Mammary epithelial cell (primary cell): ENCODE measurements at regions of chr14 and their contacts with region 1.

Region 1: GRCh38 chr14:51780006-51780692 is 80.3 kb upstream of the GNG2 start:
- DNase-seq: peak; percentile 35
- H3K4me3 ChIP-seq: no peak overlapping the region
- H3K27ac ChIP-seq: no peak overlapping the region
- H3K4me1 ChIP-seq: peaks cover 7% of the 10 kb centered on the region
- H3K27me3 ChIP-seq: no peaks in the 10 kb centered on the region
- CTCF ChIP-seq: peak; percentile 67 to 76

Region 2: DNA sequence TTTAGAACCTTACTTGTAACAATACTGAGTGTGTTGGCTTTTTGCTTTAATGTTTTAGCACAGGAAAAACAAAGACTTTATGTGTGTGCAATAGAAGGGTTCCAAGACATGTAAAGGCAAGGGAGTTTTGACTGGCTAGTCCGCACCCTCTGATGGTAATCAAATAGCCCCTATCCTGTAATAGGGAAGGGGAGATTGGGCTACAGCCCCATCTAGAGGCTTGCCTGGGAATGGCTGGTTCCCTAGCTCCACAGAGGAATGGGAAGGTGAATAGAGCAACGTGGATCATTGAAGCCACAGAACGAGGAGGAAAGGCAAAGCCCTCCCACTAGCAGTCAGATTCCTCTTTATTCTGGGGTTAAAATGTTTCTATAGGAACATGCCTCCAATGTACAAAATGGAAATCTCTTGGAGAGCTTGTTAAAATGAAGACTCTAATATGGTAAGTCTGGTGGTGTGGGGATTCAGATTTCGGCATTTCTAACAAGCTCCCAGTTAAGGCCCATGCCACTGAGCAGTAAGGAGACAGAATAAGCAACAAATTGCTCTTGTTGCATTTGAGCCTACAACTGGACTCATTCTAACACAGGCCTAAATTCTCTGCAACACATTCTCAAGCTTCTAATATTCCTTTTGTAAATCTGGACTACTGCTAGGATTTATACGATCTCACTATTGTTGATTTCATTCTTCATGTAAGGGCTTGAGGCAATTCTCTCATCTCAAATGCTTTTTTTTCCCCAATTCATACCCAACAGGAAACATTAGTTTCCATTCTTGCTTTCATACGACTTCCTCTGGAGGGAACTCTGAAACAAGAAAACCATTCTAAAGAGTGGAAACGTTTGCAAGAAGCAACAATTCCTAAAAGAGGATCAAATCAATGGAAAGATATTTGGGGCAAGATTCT is 1006.3 kb before region 1 on chr14:
- CTCF ChIA-PET with region 1: no interaction called
- dilution Hi-C with region 1: no loop called
- in situ Hi-C with region 1: no loop called
- intact Hi-C with region 1: loop called (anchors 5 kb)
- DNase-seq: peak; percentile 59
- H3K4me3 ChIP-seq: no peak overlapping the region
- H3K27ac ChIP-seq: peak overlapping the region; percentile 9
- H3K4me1 ChIP-seq: peaks cover 43% of the 10 kb centered on the region
- H3K27me3 ChIP-seq: no peaks in the 10 kb centered on the region
- CTCF ChIP-seq: peak; percentile 92 to 97

Region 3: GRCh38 chr14:50954811-50955372 is 825.3 kb before region 1 on chr14:
- CTCF ChIA-PET with region 1: no interaction called
- dilution Hi-C with region 1: no loop called
- in situ Hi-C with region 1: no loop called
- intact Hi-C with region 1: loop called (anchors 1 kb)
- DNase-seq: peak; percentile 66
- H3K4me3 ChIP-seq: peak overlapping the region in 2 of 3 experiments; percentile 20 to 33
- H3K27ac ChIP-seq: peak overlapping the region; percentile 88
- H3K4me1 ChIP-seq: peaks cover 14% of the 10 kb centered on the region
- H3K27me3 ChIP-seq: no peaks in the 10 kb centered on the region
- CTCF ChIP-seq: peak; percentile 53 to 74

Region 4: GRCh38 chr14:51283402-51284085 is 496.6 kb before region 1 on chr14:
- CTCF ChIA-PET with region 1: interaction called, 3 read pairs
- dilution Hi-C with region 1: no loop called
- in situ Hi-C with region 1: loop called (anchors 5 to 10 kb)
- intact Hi-C with region 1: loop called (anchors 1 kb)
- DNase-seq: peak; percentile 78
- H3K4me3 ChIP-seq: no peak overlapping the region
- H3K27ac ChIP-seq: no peak overlapping the region
- H3K4me1 ChIP-seq: peaks cover 9% of the 10 kb centered on the region
- H3K27me3 ChIP-seq: no peaks in the 10 kb centered on the region
- CTCF ChIP-seq: peak; percentile 67 to 84

Region 5: GRCh38 chr14:51554953-51555352 is 225.2 kb before region 1 on chr14:
- CTCF ChIA-PET with region 1: interaction called, 3 read pairs
- dilution Hi-C with region 1: no loop called
- in situ Hi-C with region 1: no loop called
- intact Hi-C with region 1: loop called (anchors 10 kb)
- DNase-seq: no peak
- H3K4me3 ChIP-seq: no peak overlapping the region
- H3K27ac ChIP-seq: peak overlapping the region; percentile 11
- H3K4me1 ChIP-seq: peaks cover 39% of the 10 kb centered on the region
- H3K27me3 ChIP-seq: no peaks in the 10 kb centered on the region
- CTCF ChIP-seq: no peak

Region 6: DNA sequence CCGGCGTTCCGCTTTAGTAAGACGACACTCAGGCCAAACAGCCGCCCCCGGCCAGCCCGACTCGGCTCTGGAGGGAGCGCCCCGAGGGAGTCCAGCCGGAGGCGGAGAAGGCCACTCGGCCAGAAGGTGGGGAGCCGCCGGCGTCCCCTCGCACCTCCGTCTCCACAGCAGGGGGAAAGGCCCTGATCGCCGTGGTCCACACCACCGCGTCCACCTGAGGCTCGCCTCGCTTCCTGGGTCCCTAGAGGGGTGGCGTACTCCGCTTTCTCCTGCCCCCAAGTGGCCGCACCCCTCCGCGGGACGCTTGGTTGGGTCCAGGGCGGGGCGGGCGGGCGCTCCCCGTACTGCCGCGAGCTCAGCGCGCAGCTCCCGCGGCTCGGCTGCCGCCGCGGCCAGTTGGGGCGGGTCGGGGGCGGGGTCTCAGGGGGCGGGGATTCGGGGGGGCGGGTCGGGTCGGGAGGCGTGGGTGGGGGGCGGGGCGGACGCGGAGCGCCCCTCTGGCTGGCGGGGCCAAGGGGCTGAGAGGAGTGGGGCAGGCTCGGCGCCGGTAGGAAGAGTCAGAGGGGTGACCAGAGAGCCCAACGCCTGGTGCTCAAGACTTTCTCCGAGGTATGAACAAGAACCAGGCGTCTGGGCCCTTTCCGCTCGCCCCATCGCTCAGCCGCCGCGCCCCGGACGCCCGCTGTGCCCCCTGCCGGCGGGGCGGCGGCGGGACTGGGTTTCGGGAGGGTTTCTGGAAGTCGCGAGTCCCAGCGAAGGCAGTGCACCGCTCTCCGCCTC is 128.6 kb before region 1 on chr14 and contains the start of gene FRMD6:
- CTCF ChIA-PET with region 1: no interaction called
- dilution Hi-C with region 1: no loop called
- in situ Hi-C with region 1: no loop called
- intact Hi-C with region 1: loop called (anchors 1 kb)
- DNase-seq: peak; percentile 88
- H3K4me3 ChIP-seq: peak within 1 kb of the TSS; percentile 89 to 94 (median 91)
- H3K27ac ChIP-seq: peak within 1 kb of the TSS; percentile 85
- H3K4me1 ChIP-seq: peaks cover 16% of the 10 kb centered on the region
- H3K27me3 ChIP-seq: no peaks in the 10 kb centered on the region
- CTCF ChIP-seq: peak; percentile 51 to 83
- total RNA-seq, gene FRMD6: 191 to 302 TPM

Region 7: DNA sequence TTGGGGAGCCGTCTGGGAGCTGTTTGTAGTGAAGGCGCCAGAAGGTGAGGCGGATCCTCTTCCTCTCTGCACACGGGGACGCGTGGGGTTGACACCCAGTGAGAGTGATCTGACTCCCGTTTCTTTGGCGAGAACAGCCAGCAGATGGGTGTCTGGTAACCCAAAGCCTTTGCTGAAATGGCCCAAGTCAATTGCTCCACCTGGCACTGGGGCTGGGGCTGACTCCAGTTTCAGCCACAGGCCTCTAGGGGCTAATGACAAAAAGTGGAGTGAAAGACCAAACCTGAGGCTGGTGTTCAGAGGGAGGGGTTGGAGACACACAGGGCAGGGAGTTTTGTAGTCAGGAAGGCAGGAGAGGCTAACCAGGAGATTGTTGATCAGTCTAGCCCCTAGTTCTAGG is 41.4 kb before region 1 on chr14:
- CTCF ChIA-PET with region 1: no interaction called
- dilution Hi-C with region 1: no loop called
- in situ Hi-C with region 1: no loop called
- intact Hi-C with region 1: no loop called
- DNase-seq: no peak
- H3K4me3 ChIP-seq: no peak overlapping the region
- H3K27ac ChIP-seq: no peak overlapping the region
- H3K4me1 ChIP-seq: no peaks in the 10 kb centered on the region
- H3K27me3 ChIP-seq: no peaks in the 10 kb centered on the region
- CTCF ChIP-seq: peak in 1 of 2 donors; percentile 5

Region 8: DNA sequence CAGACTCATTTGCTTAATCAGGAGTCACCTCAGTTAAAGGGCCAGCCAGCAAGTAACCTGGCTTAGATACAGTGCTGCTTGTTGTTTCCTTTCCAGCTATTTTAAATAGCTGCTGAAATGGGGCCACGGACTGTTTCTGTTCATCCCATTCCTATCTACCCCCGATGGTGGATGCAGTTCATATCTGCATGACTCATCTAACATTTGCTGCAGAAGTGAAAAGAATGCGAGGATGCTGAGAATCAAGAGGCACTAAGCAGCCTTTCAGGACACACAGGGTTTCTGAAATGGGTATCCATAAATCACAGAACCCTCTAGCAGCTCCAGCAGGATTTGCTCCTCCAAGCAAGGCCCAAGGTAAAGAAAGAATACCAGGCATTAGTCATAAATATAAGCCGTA is 149.0 kb after region 1 on chr14:
- CTCF ChIA-PET with region 1: no interaction called
- dilution Hi-C with region 1: no loop called
- in situ Hi-C with region 1: no loop called
- intact Hi-C with region 1: no loop called
- DNase-seq: no peak
- H3K4me3 ChIP-seq: no peak overlapping the region
- H3K27ac ChIP-seq: no peak overlapping the region
- H3K4me1 ChIP-seq: no peaks in the 10 kb centered on the region
- H3K27me3 ChIP-seq: no peaks in the 10 kb centered on the region
- CTCF ChIP-seq: no peak

Region 9: GRCh38 chr14:51989293-51990234 is 209.4 kb after region 1 on chr14 and contains the start of gene RTRAF:
- CTCF ChIA-PET with region 1: no interaction called
- dilution Hi-C with region 1: no loop called
- in situ Hi-C with region 1: loop called in 1 of 2 experiments (anchors 25 kb)
- intact Hi-C with region 1: no loop called
- DNase-seq: peak; percentile 91
- H3K4me3 ChIP-seq: peak within 1 kb of the TSS; percentile 58 to 98 (median 69)
- H3K27ac ChIP-seq: peak within 1 kb of the TSS; percentile 69
- H3K4me1 ChIP-seq: peaks cover 6% of the 10 kb centered on the region
- H3K27me3 ChIP-seq: no peaks in the 10 kb centered on the region
- CTCF ChIP-seq: no peak
- total RNA-seq, gene RTRAF: 52.7 to 176 TPM